ENCODE measurements at regions of chr20 and their contacts with region 1.

Region 1: DNA sequence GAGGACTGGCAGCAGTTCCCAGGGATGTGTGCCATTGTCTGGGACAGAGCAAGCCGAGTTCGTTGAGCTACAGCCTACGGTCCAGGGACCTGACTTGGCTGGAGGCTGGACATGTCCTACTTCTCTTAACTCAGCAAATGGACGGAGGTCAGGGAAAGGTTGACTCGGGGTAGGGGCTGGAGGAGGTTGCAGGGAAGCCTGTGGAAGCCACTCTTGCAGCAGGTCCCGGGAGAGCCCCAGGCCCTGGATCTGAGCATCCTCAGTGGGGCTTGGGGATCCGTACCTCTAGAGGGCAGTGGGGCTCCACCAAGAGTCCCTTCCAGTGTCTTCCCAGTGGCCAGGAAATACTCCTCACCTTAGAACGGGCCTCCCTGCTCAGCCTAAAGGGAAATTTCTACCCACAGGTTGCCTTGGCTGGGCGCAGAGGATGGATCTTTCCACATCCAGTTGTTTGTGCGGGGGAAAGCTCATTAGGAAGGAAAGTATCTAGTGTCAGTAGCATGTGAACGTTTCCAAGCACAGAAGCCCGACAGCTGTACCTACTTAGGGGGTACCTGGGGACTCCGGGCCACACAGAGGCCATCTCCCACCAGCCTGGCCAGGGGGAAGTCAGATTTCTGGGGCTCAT is 170.2 kb downstream of the NFATC2 start:
- ATAC-seq: peak; percentile 87 to 100 (median 99)
- H3K4me3 ChIP-seq: no peak overlapping the region
- H3K27ac ChIP-seq: no peak overlapping the region
- H3K4me1 ChIP-seq: peaks cover 0 to 3% of the 10 kb centered on the region in 2 donors

Region 2: DNA sequence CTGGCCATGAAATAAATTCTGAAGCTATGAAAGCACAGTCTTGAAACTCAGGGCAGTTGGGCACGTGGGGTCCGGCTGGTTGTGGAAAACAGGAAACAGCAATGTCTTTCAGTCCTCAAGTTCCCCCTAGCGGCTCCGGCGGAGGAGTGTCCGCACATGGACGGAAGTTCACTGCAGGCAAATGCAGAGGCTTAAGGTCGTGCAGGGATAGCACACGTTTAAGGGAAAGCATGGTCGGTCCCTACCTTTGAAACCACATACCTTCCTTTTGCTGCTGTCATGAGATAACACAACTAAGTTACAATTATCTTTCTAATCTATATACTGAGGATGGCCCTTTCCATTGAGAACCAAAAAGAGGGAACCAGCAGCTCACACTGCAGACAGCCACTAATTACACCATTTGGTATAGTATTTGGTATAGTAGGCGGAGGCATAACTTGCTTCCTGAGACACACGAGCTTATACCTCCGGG is 222.8 kb after region 1 on chr20:
- in situ Hi-C with region 1: loop called in 7 of 9 experiments (anchors 10 to 25 kb)
- ATAC-seq: peak; percentile 81 to 98 (median 92)
- H3K4me3 ChIP-seq: no peak overlapping the region
- H3K27ac ChIP-seq: no peak overlapping the region
- H3K4me1 ChIP-seq: no peaks in the 10 kb centered on the region

Region 3: GRCh38 chr20:51616060-51616459 is 243.8 kb after region 1 on chr20:
- in situ Hi-C with region 1: loop called in 4 of 9 experiments (anchors 10 to 25 kb)
- ATAC-seq: no peak
- H3K4me3 ChIP-seq: no peak overlapping the region
- H3K27ac ChIP-seq: no peak overlapping the region
- H3K4me1 ChIP-seq: peaks cover 0 to 4% of the 10 kb centered on the region in 2 donors